ENCODE measurements at regions of chr6 and their contacts with region 1.

Region 1: DNA sequence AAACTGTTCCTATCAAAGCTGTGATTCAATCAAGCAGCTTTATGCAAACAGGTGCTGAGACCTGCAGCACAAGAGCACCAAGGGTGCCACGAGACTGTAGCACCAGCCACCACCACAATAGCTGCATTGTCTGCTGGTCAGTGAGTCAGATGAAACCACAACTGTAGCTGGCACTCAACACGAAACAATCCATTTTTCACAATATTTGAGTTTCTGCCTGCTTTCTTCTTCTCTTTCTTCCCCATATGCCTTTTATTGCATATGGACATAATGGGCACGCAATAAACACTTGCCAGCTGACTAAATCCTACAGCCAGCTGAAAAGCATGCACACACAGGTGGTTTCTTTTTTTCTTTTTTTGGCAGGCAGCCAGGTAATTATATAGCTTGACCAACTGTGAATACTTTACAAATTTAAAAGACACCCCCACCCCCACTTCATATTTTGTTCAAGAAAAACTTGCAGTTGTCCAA is 16.6 kb downstream of the SLC2A12 start:
- DNase-seq: no peak
- H3K4me3 ChIP-seq: no peak overlapping the region
- CTCF ChIP-seq: no peak
- POLR2A ChIP-seq: no peak

Region 2: DNA sequence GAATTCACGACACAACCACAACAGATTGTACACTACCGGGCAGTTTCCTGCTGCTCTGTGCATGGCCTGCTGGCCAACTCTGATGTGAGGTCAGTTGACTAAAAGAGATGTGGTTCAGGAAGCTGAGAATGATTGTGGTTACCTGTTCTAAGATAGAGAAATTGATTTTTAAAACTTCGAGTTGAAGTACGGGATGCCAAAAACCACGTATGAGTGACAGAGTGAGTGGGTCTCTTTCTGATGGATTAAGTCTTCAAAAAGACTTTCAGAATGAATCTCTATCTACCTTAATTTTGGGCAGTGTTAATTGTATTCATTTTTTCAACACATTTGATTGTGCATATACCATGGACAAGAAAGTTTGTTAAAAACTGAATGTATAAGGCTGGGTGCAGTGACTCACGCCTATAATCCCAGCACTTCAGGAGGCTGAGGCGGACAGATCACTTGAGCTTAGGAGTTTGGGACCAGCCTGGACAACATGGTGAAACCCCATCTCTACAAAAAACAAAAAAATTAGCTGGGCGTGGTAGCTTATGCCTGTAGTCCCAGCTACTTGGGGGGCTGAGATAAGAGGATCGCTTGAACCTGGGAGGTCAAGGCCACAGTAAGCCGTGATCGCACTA is 160.8 kb after region 1 on chr6:
- intact Hi-C with region 1: no loop called
- DNase-seq: no peak
- H3K4me3 ChIP-seq: no peak overlapping the region
- CTCF ChIP-seq: no peak
- POLR2A ChIP-seq: no peak

Region 3: DNA sequence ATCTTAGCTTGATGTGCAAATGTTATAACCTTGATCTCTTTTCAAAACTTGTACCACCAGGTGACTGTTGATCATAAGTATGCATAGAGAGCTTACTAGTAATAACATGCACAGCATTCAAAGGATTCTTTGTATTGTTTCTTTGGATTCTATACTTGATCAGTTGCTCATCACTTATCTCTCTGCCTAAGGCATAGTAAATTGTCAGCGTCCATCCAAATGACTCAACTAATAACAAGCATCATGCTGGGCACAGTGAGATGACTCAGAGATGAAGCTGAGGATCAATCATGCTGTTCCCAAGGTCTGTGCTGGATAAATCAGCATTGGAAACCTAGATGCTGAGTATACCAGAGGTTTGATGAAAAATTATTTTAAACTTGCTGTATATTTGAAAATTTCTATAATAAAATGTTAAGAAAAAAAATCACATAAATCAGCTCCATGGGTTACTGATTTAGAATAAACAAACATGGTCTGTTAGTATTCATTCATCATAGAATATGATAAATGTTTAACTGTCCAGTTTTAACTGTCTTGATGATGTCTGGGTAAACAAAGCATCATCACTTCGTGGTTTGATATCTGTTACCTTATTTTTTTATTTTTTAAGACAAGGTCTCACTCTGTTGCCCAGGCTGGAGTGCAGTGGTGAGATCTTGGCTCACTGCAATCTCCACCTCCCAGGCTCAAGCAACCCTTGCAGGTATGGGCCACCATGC is 327.6 kb after region 1 on chr6:
- intact Hi-C with region 1: loop called (anchors 10 kb)
- DNase-seq: no peak
- H3K4me3 ChIP-seq: no peak overlapping the region
- CTCF ChIP-seq: no peak
- POLR2A ChIP-seq: no peak

Region 4: DNA sequence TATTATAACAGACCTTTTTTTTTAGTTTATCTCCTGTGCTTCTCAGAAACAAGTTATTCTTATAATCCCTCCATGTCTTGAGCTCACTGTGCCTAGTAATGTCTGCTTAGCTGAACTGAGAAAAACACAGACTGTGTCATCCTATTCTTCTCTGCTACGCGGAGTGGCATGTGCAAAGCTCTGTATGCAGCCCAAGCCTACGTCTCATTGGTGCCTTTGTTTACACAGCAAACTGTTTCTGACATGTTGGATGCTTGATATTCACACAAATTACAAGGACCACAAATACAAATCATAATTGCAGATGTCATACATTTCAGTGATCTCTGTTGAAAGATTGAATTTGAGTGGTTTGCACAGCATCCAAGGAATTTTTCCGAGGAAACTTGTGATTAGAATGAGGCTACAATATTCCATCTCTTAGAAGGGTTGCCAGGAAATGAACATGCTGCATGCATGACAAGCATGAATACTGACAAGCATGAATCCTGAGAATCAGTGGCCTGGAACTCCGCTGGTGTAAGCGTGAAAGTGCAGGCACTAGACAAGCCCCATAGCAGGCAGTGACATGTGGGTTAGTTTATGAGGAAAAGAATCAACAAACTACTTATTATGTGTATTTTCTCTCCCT is 410.5 kb after region 1 on chr6:
- intact Hi-C with region 1: no loop called
- DNase-seq: no peak
- H3K4me3 ChIP-seq: no peak overlapping the region
- CTCF ChIP-seq: no peak
- POLR2A ChIP-seq: no peak

Measured in lower leg skin (tissue), 4 donors.